ENCODE measurements at regions of chr1 and their contacts with region 1.

Region 1: DNA sequence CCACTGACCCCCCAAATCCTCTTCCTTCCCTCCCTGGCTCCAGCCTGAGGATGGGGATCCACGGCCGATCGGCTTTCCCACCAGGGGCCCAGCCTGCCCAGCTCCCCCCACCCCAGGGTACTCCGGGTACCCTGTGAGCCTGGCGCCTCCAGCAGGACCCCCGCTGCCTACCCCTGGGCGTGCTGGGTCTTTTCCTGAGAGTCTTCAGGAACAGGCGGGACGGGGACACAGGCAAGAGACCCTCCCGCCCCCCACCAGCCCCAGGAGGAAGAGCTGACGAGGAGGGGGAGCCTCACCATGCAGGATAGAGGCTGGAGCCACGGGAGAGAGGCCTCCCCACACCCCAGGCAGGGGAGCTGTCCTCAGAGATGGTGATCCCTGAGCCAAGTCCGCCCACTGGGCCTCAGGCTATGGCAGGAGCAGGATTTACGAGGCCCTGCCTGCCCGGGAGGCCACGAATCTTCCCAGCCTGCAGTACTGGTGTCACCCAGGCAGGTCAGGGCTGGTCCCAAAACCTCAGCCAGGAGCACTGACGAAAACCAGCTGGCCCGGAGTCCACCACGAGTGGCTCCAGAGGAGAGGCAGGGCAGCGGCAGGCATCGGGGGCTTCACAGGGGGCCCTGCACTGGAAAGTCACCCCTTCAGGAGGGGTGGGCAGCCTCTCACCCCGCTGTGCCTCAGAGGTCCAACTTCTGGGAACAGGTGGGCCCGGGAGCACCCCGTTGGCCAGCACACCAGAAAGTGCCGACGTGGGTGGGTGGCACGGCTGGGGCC is 58.0 kb downstream of the MEGF6 start:
- DNase-seq: no peak
- ATAC-seq: no peak
- H3K4me3 ChIP-seq: no peak overlapping the region
- H3K4me3 Mint-ChIP-seq: no peak overlapping the region
- H3K27ac ChIP-seq: no peak overlapping the region
- H3K27ac Mint-ChIP-seq: no peak overlapping the region
- H3K4me1 ChIP-seq: no peaks in the 10 kb centered on the region
- H3K4me1 Mint-ChIP-seq: no peaks in the 10 kb centered on the region
- H3K27me3 ChIP-seq: no peaks in the 10 kb centered on the region
- H3K27me3 Mint-ChIP-seq: no peaks in the 10 kb centered on the region
- CTCF ChIP-seq: no peak

Region 2: DNA sequence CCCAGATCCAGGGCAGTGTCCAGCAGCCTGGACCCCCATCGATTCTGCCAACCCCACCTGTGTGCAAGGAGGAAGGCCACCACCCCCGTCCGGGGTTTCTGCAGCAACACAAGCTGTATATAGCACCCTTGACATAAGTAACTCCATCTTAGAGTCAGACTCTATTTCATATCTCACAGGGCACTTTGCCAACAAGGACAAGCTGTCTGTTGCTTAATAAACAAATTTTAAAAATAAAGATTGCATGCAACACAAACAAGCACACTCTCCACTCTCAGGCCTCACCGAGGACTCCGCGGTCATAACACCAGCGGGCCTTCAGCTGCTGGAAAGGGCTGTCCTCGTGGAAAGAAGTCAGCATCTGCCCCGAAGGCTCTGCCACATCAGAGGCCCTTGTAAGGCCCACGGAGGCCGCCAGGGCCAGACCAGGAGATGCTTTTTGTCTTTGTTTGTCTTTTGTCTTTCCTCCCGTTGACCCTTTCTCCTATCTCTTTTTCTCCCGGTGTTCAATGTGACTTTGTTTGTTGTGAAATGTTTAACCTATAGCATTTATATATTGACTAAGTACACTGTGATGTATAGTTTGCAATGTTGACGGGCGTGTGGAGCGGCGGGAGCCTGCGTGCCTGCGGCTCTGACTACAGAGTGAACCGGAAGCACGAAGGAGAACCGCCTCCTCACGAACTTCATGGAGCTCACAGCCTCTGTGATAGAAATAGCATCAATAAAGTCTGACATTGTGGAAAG is 33.8 kb after region 1 on chr1:
- CTCF ChIA-PET with region 1: no interaction called
- POLR2A ChIA-PET with region 1: no interaction called
- intact Hi-C with region 1: loop called in 1 of 2 experiments (anchors 5 kb)
- DNase-seq: no peak
- ATAC-seq: no peak
- H3K4me3 ChIP-seq: no peak overlapping the region
- H3K4me3 Mint-ChIP-seq: no peak overlapping the region
- H3K27ac ChIP-seq: no peak overlapping the region
- H3K27ac Mint-ChIP-seq: no peak overlapping the region
- H3K4me1 ChIP-seq: no peaks in the 10 kb centered on the region
- H3K4me1 Mint-ChIP-seq: no peaks in the 10 kb centered on the region
- H3K27me3 ChIP-seq: no peaks in the 10 kb centered on the region
- H3K27me3 Mint-ChIP-seq: no peaks in the 10 kb centered on the region
- CTCF ChIP-seq: no peak

Measured in CD4-positive, alpha-beta T cell (primary cell).